GM10248 (cell line): ENCODE measurements at regions of chr5 and their contacts with region 1.

Region 1: DNA sequence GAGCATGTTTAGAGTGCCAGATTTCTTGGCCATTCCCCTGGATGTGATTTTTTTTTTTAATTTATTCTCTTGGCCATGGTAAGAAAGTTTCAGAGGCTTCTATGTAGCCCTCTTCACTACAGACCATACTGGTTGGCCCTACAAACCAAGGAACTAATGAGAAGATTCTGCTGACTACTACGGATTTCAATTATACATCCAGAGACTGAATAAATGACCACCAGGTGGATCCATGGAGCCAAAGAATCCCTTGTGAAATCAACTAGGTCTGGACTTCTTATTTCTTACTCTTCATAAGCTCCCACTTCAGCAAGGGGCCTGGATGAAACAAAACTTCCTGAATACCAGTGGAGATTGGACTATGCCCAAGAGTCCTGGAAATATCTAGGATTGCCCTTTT is 27.6 kb downstream of the ZNF622 start:
- DNase-seq: no peak
- CTCF ChIP-seq: no peak

Region 2: DNA sequence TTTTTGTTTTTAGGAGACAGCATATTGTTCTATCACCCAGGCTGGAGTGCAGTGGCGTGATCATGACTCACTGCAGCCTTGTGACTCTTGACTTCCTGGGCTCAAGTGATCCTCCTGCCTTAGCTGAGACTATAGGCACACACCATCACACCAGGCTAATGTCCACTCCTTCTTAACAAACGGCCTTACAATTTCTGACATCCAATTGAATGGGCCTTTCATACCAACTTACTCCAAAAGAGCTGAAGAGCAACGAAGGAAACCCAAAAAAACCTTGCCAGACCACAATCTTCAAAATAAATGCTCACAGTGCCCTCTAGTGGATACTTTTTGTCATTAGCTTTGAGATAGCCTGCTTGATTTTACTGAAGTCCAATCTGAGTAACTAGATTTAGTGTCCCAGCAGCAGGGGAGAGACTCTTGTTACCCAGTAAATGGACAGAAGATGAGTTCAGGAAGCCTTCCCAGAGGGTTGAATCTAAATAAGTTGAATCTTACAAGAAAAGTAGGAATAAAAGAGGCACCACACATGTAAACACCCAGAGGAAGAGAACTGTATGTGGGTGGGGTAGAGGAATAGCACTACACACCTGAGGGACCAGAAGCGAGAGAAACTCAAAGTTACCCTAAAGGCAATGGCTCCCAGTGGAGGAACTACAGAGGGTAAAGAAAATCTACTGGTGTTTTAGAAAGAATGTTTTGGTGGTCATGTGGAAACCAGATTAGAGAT is 18.3 kb after region 1 on chr5:
- CTCF ChIA-PET with region 1: interaction called, 13 read pairs
- POLR2A ChIA-PET with region 1: no interaction called
- DNase-seq: peak; percentile 40
- CTCF ChIP-seq: peak; percentile 43